Astrocyte of the cerebellum (primary cell): ENCODE measurements at regions of chr9 and their contacts with region 1.

Region 1: GRCh38 chr9:110638381-110638954 is 30.1 kb upstream of the MUSK start:
- DNase-seq: peak; percentile 24
- H3K4me3 ChIP-seq: no peak overlapping the region
- CTCF ChIP-seq: peak; percentile 25

Region 2: DNA sequence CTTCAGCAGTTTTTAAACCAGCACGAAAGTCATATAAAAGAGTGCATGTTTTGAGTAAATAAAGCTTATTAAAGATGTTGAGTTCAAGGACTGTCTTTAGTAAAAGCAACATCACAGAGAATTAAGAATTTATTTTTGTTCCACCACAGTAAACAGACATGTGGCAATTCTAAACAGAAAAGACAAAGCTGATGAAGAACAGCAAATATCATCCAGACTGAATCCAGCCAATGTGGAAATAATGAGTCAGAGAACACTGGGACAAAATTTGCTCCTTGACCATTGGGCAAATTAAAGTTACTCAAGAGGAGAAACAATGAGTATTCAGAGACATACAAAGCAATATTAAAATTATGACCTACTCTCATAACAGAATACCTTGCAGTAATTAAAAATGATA is 662.7 kb after region 1 on chr9:
- in situ Hi-C with region 1: loop called (anchors 10 kb)
- DNase-seq: no peak
- H3K4me3 ChIP-seq: no peak overlapping the region
- CTCF ChIP-seq: no peak